SK-N-SH (cell line): ENCODE measurements at regions of chr18 and their contacts with region 1.

Region 1: GRCh38 chr18:61322265-61322873 is 10.9 kb upstream of the CDH20 start:
- DNase-seq: peak; percentile 62
- H3K4me3 ChIP-seq: no peak overlapping the region; a peak in 1 of 4 replicates
- H3K27ac ChIP-seq: no peak overlapping the region
- H3K4me1 ChIP-seq: no peaks in the 10 kb centered on the region
- H3K27me3 ChIP-seq: no peaks in the 10 kb centered on the region
- CTCF ChIP-seq: peak; percentile 90
- EP300 ChIP-seq: no peak
- RAD21 ChIP-seq: peak; percentile 82

Region 2: GRCh38 chr18:61333746-61334490 is 11.5 kb after region 1 on chr18:
- CTCF ChIA-PET with region 1: interaction called, 25 read pairs
- POLR2A ChIA-PET with region 1: no interaction called
- DNase-seq: peak; percentile 78
- H3K4me3 ChIP-seq: peak overlapping the region; percentile 66 to 76
- H3K27ac ChIP-seq: no peak overlapping the region
- H3K4me1 ChIP-seq: peaks cover 0 to 8% of the 10 kb centered on the region in 2 experiments; a peak in 1 of 4 replicates
- H3K27me3 ChIP-seq: no peaks in the 10 kb centered on the region; the same call in 1 of the 2 replicates
- CTCF ChIP-seq: no peak
- EP300 ChIP-seq: no peak
- RAD21 ChIP-seq: no peak

Region 3: GRCh38 chr18:61426492-61427053 is 104.2 kb after region 1 on chr18:
- CTCF ChIA-PET with region 1: no interaction called
- POLR2A ChIA-PET with region 1: no interaction called
- DNase-seq: no peak
- H3K4me3 ChIP-seq: no peak overlapping the region
- H3K27ac ChIP-seq: no peak overlapping the region
- H3K4me1 ChIP-seq: no peaks in the 10 kb centered on the region
- H3K27me3 ChIP-seq: no peaks in the 10 kb centered on the region
- CTCF ChIP-seq: no peak
- EP300 ChIP-seq: no peak
- RAD21 ChIP-seq: no peak

Region 4: GRCh38 chr18:61870151-61870550 is 547.8 kb after region 1 on chr18:
- CTCF ChIA-PET with region 1: no interaction called
- POLR2A ChIA-PET with region 1: no interaction called
- DNase-seq: peak; percentile 23
- H3K4me3 ChIP-seq: no peak overlapping the region
- H3K27ac ChIP-seq: peak overlapping the region; percentile 45 to 54; a peak in 2 of 4 replicates
- H3K4me1 ChIP-seq: peaks cover 9 to 19% of the 10 kb centered on the region in 2 experiments
- H3K27me3 ChIP-seq: no peaks in the 10 kb centered on the region
- CTCF ChIP-seq: no peak
- EP300 ChIP-seq: no peak
- RAD21 ChIP-seq: no peak